ENCODE measurements at regions of chr22 and their contacts with region 1.

Region 1: DNA sequence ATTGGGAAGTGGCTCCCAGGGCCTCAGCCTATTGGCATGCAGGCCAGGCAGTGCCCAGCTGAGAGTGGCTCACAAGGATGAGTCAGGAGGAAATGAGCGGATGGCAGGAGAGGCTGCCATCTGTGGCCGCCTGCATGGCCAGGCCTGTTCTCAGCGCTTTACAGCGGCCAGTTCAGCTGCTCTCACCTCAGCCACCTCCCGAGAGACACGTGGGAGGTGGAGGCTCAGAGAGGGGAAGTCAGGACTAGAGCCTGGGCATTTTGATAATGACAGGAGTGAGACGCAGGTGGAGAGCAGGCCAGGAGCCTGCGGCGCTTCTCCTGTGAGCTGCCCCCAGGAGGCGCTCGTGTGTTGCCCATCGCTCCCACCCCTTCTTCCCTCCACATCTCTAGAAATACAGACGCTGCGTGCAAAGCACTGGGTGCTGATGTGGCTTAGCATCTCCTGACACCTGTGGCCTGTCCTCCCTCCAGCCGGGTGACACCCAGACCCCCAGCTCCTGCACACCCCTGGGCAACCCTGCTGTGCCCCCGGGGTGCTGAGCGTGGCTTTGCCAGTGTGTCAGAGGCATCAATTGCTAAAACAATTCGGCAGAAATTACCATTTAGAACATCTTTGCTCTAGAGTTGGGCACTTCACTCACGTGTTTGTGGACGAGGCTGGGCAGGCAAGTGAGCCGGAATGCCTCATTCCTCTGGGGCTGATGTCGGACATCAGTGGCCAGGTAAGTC is 21.4 kb upstream of the PANX2 start:
- DNase-seq: peak; percentile 61
- H3K4me3 Mint-ChIP-seq: no peak overlapping the region
- H3K27ac Mint-ChIP-seq: no peak overlapping the region
- H3K4me1 Mint-ChIP-seq: peaks cover 8% of the 10 kb centered on the region
- H3K27me3 Mint-ChIP-seq: no peaks in the 10 kb centered on the region

Region 2: GRCh38 chr22:50200461-50201190 is 51.5 kb after region 1 on chr22 and contains the start of gene SELENOO:
- intact Hi-C with region 1: loop called (anchors 2 kb)
- DNase-seq: peak; percentile 90
- H3K4me3 Mint-ChIP-seq: peak within 1 kb of the TSS; percentile 88
- H3K27ac Mint-ChIP-seq: peak within 1 kb of the TSS; percentile 63
- H3K4me1 Mint-ChIP-seq: peaks cover 19% of the 10 kb centered on the region
- H3K27me3 Mint-ChIP-seq: no peaks in the 10 kb centered on the region
- total RNA-seq, gene SELENOO: 23.7 and 25.9 TPM in 2 replicates

Region 3: GRCh38 chr22:50209893-50210292 is 60.7 kb after region 1 on chr22:
- intact Hi-C with region 1: loop called (anchors 1 kb)
- DNase-seq: no peak
- H3K4me3 Mint-ChIP-seq: no peak overlapping the region
- H3K27ac Mint-ChIP-seq: no peak overlapping the region
- H3K4me1 Mint-ChIP-seq: peaks cover 5% of the 10 kb centered on the region
- H3K27me3 Mint-ChIP-seq: no peaks in the 10 kb centered on the region

Region 4: DNA sequence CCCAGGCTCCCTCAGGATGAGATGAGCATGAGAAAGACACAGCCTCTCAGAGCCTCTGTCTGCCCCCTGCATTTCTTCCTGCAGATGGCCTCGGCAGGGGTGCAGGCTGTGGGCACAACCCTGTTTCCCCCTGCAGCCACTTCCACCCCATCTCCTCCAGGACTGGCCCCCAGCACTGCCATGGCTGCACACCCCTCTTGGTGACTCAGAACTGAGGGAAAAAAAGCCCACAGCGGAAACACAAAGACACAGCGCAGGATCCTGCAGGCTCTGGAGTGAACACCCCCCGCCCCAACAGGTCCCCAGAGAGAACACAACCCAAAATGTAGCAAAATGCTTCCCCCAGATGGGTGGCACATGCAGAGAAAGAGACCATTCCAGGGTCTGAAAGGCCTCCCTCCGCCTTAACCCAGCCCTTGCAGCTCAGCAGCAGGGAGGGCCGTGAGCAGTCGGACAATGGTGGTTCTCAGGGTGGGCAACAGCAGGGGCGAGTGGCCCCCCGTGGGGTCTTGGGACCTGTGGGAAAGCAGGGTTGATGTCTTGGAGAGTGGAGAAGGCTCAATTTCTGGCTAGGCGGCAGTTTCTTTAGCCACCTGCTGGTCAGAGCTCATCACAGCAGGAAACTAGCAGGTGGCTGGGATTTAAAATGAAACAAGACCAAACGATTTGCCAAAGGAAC is 87.7 kb after region 1 on chr22:
- intact Hi-C with region 1: loop called (anchors 1 kb)
- DNase-seq: no peak
- H3K4me3 Mint-ChIP-seq: no peak overlapping the region
- H3K27ac Mint-ChIP-seq: no peak overlapping the region
- H3K4me1 Mint-ChIP-seq: peaks cover 12% of the 10 kb centered on the region
- H3K27me3 Mint-ChIP-seq: no peaks in the 10 kb centered on the region

Region 5: DNA sequence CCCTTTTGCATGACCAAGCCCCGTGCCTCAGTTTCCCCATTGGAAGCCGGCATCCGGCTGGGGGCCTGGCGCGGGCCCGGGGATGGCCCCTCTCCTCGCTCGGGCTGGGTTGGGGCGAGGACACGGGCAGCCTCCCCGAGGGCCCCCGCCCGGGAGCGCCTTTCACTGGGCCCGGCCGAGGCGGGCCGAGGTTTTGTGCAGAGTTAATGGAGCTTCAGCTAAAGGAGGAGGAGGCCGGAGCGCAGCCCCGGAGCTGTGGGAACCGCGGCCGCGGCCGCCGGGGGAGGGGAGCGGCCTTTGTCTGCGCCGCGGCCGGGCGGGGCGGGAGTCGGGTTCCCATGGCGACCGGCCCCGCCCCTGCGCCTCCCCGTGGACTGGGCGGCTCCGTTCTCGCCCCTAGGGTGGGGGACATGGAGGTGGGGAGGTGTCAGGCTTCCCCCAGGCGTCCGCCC is 122.4 kb after region 1 on chr22:
- intact Hi-C with region 1: no loop called
- DNase-seq: peak; percentile 55
- H3K4me3 Mint-ChIP-seq: no peak overlapping the region
- H3K27ac Mint-ChIP-seq: no peak overlapping the region
- H3K4me1 Mint-ChIP-seq: peaks cover 10% of the 10 kb centered on the region
- H3K27me3 Mint-ChIP-seq: peaks cover 8% of the 10 kb centered on the region

Region 6: GRCh38 chr22:50498322-50498890 is 349.2 kb after region 1 on chr22:
- intact Hi-C with region 1: loop called (anchors 2 kb)
- DNase-seq: peak; percentile 61
- H3K4me3 Mint-ChIP-seq: no peak overlapping the region
- H3K27ac Mint-ChIP-seq: no peak overlapping the region
- H3K4me1 Mint-ChIP-seq: peaks cover 10% of the 10 kb centered on the region
- H3K27me3 Mint-ChIP-seq: peaks cover 10% of the 10 kb centered on the region

Region 7: GRCh38 chr22:50612528-50613221 is 463.5 kb after region 1 on chr22:
- intact Hi-C with region 1: no loop called
- DNase-seq: no peak
- H3K4me3 Mint-ChIP-seq: no peak overlapping the region
- H3K27ac Mint-ChIP-seq: no peak overlapping the region
- H3K4me1 Mint-ChIP-seq: no peaks in the 10 kb centered on the region
- H3K27me3 Mint-ChIP-seq: peaks cover 8% of the 10 kb centered on the region